A549 (cell line): ENCODE measurements at regions of chr10 and their contacts with region 1.

Region 1: GRCh38 chr10:69957886-69958555 is 94.6 kb upstream of the MACROH2A2 start:
- DNase-seq: peak; percentile 61 to 82
- ATAC-seq: peak; percentile 47 to 87; a peak in 5 of 6 replicates
- H3K4me3 ChIP-seq: no peak overlapping the region
- H3K27ac ChIP-seq: no peak overlapping the region
- H3K4me1 ChIP-seq: no peaks in the 10 kb centered on the region
- CTCF ChIP-seq: peak; percentile 69
- EP300 ChIP-seq: no peak
- POLR2A ChIP-seq: no peak
- RAD21 ChIP-seq: peak; percentile 47 to 71; a peak in 4 of 5 replicates

Region 2: GRCh38 chr10:69786791-69787190 is 171.2 kb before region 1 on chr10:
- CTCF ChIA-PET with region 1: interaction called, 24 read pairs
- POLR2A ChIA-PET with region 1: no interaction called
- DNase-seq: peak in 1 of 2 experiments; percentile 31
- ATAC-seq: peak; percentile 76 to 87; a peak in 4 of 6 replicates
- H3K4me3 ChIP-seq: no peak overlapping the region
- H3K27ac ChIP-seq: no peak overlapping the region
- H3K4me1 ChIP-seq: no peaks in the 10 kb centered on the region
- CTCF ChIP-seq: peak; percentile 33; the same call in 2 of the 3 replicates
- EP300 ChIP-seq: no peak
- POLR2A ChIP-seq: no peak
- RAD21 ChIP-seq: peak; percentile 63 to 71

Region 3: DNA sequence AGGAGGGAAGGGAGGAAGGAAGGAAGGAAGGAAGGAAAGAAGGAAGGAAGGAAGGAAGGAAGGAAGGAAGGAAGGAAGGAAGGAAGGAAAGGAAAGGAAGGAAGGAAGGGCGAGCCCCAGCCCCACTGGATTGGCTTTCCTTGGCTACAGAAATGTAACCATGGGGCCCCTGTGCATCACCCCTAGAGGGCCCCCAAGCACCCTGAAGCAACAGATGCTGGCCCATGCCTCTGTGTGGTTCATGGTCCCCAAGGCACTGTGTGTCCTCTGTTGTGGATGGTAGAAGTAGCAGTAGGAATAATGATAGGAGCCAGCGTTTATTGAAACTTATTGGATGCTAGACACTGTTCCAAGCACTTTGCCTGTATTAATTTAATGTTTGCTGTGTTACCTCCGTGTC is 21.9 kb before region 1 on chr10:
- CTCF ChIA-PET with region 1: interaction called, 12 read pairs
- POLR2A ChIA-PET with region 1: no interaction called
- DNase-seq: peak in 1 of 2 experiments; percentile 21
- ATAC-seq: peak; percentile 65 to 79; a peak in 4 of 6 replicates
- H3K4me3 ChIP-seq: no peak overlapping the region
- H3K27ac ChIP-seq: no peak overlapping the region
- H3K4me1 ChIP-seq: no peaks in the 10 kb centered on the region
- CTCF ChIP-seq: no peak
- EP300 ChIP-seq: no peak
- POLR2A ChIP-seq: no peak
- RAD21 ChIP-seq: peak in 1 of 2 experiments; percentile 41; a peak in 1 of 5 replicates

Region 4: DNA sequence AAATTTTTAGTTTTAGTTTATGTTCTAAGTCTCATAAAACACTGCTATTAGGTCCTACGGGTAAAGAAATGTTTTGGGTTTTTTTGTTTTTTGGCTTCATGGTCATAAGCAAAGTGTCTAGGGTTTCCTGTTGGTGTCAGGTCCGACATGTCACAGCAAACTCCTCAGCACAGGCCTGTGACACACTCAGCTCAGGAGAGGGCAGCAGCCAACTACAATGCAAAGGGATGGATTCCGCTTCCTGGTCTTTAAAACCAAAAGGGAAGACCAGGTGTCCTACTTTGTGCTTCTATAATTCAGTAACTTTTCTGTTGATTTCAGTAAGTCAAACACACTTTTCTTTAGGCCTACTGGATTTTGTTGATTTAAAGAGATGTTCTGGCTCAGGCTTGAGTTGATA is 10.8 kb after region 1 on chr10:
- CTCF ChIA-PET with region 1: interaction called, 28 read pairs
- POLR2A ChIA-PET with region 1: no interaction called
- DNase-seq: peak in 1 of 2 experiments; percentile 38
- ATAC-seq: peak in 1 of 2 experiments; percentile 70; a peak in 3 of 6 replicates
- H3K4me3 ChIP-seq: no peak overlapping the region
- H3K27ac ChIP-seq: no peak overlapping the region
- H3K4me1 ChIP-seq: no peaks in the 10 kb centered on the region
- CTCF ChIP-seq: no peak
- EP300 ChIP-seq: no peak
- POLR2A ChIP-seq: no peak
- RAD21 ChIP-seq: peak in 1 of 2 experiments; percentile 49; a peak in 3 of 5 replicates